ENCODE measurements at regions of chr2 and their contacts with region 1.

Region 1: DNA sequence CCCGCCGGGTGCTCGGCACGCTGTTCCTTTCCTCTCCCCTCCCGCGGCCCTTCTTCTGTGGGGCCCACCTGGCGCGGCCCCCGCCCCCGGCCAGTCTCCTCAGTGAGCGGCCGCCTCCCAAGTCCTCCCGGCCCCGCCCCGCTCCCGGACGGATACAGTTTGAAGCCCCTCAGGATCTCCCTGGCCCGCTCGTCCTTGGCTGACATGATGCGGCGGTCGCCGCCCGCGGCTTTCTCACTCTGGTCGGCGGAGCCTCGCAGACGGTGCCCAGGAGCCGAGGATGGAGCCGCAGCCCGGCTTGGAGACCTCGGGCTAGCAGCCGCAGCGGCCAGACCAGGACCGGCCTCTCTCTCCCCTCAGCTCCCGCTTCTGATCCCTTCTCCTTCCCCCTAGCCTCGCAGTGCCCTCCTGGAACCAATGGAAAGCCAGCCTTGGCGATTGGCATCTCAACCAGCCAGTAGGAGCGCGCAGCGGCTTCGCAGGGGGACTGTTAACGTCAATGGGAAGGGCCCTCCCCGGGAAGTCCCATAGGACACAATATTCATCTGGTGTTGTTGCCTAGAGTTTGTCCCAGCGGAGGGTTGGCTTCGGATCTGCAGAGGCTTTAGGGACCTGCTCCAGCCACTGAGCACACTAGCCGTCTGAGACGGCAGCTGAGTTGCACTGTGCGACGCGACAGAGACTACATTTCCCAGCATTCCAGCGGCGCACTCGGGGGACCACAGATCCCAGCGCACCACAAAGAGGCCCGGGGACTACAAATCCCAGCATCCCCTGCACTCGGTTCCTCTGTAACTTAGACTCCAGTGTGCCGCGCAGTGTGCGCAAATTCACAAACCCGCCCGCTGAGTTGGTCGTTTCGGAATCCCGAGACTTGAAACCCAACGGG is at the start of gene PDE6D:
- H3K4me3 Mint-ChIP-seq: peak within 1 kb of the TSS; percentile 100
- H3K27ac Mint-ChIP-seq: peak within 1 kb of the TSS; percentile 99
- H3K4me1 Mint-ChIP-seq: peaks cover 55% of the 10 kb centered on the region
- H3K27me3 Mint-ChIP-seq: no peaks in the 10 kb centered on the region

Region 2: DNA sequence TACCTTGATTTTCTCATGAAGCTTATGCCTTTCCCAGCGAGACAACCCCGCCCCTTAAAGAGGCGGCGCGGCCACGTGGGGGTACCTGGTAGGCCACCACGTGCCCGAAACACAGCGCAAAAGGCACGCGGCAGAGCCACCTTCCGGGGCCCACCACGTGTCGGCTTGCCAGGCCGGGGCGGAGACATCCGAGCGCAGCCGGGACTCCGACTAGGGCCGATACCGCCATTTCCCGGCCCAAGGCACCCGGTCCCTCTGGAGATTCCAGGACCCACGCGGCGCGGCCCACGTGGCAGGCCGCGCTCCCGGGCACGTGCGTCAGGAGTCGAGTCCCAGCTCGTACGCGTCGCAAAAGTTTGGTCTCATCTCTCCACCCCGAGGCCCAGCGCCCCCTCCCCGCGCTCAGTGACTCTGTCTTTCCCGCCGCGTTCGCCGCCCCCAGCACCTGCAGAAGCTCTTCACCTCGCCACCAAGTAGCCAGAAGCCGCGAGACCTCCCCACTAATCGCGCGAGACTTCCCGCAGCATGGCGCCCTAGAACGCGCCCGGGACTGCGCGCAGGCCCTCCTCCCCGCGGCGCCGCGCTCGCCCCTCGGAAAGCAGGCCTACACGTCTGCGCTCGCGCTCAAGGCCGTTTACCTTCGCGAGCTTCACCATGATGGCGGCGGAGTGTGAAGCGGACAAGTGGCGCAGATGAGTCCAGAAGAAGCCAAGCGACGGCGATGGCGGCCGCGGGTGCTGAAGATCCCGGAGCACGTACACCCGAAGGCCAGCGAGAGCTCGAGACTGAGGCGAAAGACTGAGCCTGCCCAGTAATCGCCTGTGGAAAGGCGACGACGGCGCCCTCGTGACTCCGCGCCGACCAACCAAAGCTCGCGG is 317.2 kb before region 1 on chr2 and contains the start of gene NCL:
- intact Hi-C with region 1: no loop called
- H3K4me3 Mint-ChIP-seq: peak within 1 kb of the TSS; percentile 96
- H3K27ac Mint-ChIP-seq: peak within 1 kb of the TSS; percentile 94
- H3K4me1 Mint-ChIP-seq: peaks cover 62% of the 10 kb centered on the region
- H3K27me3 Mint-ChIP-seq: no peaks in the 10 kb centered on the region

Region 3: DNA sequence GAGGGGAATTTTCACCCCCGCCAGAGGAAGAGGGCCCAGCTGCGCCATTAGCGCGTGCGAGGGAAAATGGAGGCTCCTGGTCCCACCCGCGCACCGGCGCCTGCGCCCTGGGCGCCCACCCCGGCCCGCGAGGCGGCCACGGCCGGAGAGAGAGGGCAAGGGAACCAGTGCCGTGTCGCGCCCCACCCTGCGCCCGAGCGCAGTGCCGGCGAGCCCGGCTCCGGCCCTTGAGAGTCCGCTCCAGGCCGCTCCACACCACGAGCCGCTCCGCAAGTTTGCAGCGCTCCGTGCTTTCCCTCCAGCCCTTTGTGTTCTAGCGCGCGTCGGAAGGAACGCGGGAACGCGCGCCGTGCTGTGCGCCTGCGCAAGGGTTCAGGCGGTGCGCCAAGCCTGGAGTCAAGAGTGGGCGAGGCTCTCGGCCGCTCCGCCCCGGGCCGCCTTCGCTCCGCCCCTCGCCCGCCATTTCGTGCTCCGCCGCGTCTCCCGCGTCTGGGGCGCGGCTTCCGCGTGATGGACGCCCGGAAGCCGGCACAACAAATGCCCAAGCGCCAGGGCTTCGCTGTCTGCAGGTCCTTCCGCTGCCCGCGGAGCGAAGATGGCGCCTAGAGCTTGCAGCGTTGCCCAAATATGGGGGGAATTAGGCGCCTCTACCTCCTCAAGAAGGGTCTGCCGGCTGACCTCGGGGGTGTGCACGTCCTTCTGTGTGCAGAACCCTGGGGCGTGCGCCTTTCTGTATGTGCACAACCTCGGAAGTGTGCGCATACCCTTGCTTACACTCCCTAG is 118.9 kb before region 1 on chr2:
- intact Hi-C with region 1: loop called (anchors 5 kb)
- H3K4me3 Mint-ChIP-seq: peak overlapping the region; percentile 63
- H3K27ac Mint-ChIP-seq: peak overlapping the region; percentile 95
- H3K4me1 Mint-ChIP-seq: peaks cover 26% of the 10 kb centered on the region
- H3K27me3 Mint-ChIP-seq: peaks cover 2% of the 10 kb centered on the region

Region 4: DNA sequence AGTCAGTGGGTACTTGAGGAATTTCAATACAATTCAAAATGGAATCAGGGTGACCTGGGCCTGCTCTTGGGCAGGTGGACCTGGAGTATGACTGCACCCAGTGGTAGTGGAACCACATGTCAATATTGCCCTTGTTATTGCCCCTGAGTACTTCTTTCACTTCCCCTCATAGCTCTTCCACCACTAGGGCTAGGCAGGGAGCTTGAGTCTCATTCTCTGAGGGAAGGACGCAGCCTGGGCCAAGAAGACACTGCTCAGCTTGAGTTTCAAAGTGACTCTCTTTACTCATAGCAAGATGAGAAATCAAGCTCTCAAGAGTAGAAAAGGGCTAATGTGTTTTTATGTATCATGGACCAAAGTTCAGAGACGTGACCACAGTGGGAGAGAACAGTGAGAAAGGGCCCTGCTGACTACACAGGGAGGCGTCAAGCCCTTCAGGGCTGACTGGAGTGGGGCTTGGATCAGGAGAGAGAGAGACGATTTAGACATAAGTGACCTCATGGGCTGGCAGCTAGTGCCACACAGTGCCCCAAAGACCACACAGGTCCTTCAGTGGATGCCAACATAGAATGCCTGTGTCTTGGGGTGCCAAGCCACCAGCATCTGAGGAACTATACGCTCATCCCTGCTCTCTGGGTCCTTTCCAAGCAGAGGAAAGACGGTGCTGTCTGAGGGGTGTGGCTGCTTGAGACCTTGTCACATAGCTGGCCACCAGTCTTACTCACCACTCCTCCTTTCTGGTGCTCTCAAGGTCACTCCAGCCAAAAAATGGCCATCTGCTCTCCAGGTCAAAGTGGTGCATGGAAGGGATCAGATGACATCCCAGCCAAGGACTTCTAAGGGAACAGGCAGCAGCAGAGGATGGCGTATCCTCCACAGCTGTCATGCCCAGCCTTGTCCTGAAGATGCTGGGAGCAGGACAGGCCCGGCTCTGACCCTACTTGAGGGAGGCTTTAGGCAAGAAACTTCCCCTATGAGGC is 59.9 kb before region 1 on chr2:
- intact Hi-C with region 1: loop called (anchors 2 kb)
- H3K4me3 Mint-ChIP-seq: peak overlapping the region; percentile 0
- H3K27ac Mint-ChIP-seq: peak overlapping the region; percentile 61
- H3K4me1 Mint-ChIP-seq: peaks cover 47% of the 10 kb centered on the region
- H3K27me3 Mint-ChIP-seq: peaks cover 17% of the 10 kb centered on the region

Region 5: GRCh38 chr2:231810905-231811304 is 29.8 kb after region 1 on chr2:
- intact Hi-C with region 1: no loop called
- H3K4me3 Mint-ChIP-seq: no peak overlapping the region
- H3K27ac Mint-ChIP-seq: no peak overlapping the region
- H3K4me1 Mint-ChIP-seq: no peaks in the 10 kb centered on the region
- H3K27me3 Mint-ChIP-seq: no peaks in the 10 kb centered on the region

Region 6: GRCh38 chr2:232550354-232551249 is 769.4 kb after region 1 on chr2 and contains the starts of genes EIF4E2 and TIGD1:
- intact Hi-C with region 1: loop called (anchors 2 kb)
- H3K4me3 Mint-ChIP-seq: peak within 1 kb of the TSS; percentile 99
- H3K27ac Mint-ChIP-seq: peak within 1 kb of the TSS; percentile 99
- H3K4me1 Mint-ChIP-seq: peaks cover 78% of the 10 kb centered on the region
- H3K27me3 Mint-ChIP-seq: no peaks in the 10 kb centered on the region

Measured in dendritic cell treated with granulocyte-macrophage colony-stimulating factor and Interleukin-4, amounts not matched to agents 40 ng/mL and 50 ng/mL, for 4 days (primary cell).